Ovary (tissue), 10 donors: ENCODE measurements at regions of chr16 and their contacts with region 1.

Region 1: GRCh38 chr16:88737298-88738150 is 31.2 kb downstream of the CTU2 start:
- DNase-seq: peak; percentile 62 to 86 (median 77)
- H3K4me3 ChIP-seq: no peak overlapping the region
- H3K27ac ChIP-seq: no peak overlapping the region
- H3K4me1 ChIP-seq: no peaks in the 10 kb centered on the region
- H3K27me3 ChIP-seq: no peaks in the 10 kb centered on the region
- CTCF ChIP-seq: peak; percentile 97 to 99 (median 98)
- EP300 ChIP-seq: no peak
- POLR2A ChIP-seq: no peak

Region 2: DNA sequence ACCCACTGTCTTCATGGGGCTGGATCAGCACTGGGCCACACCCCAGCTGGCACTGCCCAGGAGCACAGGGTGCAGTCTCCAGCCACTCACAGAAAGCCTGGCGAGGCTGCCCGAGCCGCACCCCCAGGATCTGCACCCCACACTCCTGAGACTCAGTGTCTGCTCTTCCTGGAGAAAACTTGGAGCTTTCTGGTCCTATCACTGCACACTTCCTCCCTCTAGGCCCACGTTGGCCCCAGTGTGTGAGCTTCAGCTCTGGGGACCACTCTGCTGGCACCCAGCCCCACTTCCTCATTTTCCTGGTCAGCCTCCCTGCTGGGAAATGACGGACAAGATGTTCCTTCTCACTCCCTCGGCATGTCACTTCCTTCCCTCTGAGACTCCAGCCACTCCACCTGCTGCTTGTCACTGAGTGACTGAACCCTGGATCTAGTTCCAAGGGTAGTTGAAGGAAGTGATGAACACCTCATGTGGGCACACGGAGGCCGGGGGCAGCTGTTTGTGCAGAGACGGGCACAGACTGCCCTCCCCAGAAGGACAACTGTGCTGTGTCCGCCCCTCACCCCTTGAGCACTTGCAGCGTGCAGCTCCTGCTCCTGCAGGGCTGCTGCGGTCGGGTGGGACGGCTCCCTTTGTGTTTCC is 138.3 kb before region 1 on chr16:
- intact Hi-C with region 1: no loop called
- DNase-seq: peak in 2 of 5 donors; percentile 40 to 49
- H3K4me3 ChIP-seq: no peak overlapping the region
- H3K27ac ChIP-seq: no peak overlapping the region
- H3K4me1 ChIP-seq: no peaks in the 10 kb centered on the region
- H3K27me3 ChIP-seq: no peaks in the 10 kb centered on the region
- CTCF ChIP-seq: no peak
- EP300 ChIP-seq: no peak
- POLR2A ChIP-seq: no peak

Region 3: DNA sequence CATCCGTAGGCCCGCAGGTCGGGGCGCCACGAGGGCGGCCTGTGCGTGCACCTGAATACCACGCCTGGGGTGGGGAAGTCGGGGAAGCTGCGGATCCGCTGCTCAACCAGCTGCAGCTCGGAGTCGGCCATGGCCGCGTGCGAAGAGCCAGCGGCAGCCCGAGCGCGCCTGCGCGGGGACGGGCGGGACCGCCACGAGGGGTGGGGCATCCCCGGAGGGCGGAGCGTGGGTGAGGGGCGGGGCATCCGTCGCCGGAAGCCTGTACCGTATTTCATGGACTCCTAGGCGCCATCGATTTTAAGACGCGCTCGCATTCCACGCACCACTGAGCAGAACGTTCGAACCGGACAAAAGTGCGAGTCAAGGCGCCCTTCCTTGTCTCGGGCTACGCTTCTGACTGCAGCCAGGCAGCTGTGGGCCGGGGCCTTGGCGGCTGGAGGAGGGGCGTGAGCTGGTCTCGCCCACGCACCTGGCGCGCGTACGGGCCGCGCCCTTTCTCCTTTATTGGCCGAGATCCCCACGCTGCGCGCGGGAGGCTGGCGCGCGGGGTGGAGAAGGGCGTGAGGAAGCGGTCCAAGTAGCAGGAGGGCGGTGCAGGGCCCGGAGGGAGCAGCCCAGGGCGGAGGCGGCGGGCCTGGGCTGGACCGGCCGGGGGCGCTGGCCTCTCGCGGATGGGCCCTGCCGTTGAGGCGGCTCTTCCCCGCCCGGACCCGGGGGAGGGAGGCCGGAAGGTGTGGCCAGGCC is 74.4 kb after region 1 on chr16 and contains the start of gene APRT:
- intact Hi-C with region 1: loop called in 1 of 4 experiments (anchors 2 kb)
- DNase-seq: peak; percentile 95 to 99 (median 97)
- H3K4me3 ChIP-seq: peak within 1 kb of the TSS; percentile 65
- H3K27ac ChIP-seq: peak within 1 kb of the TSS; percentile 93 to 95
- H3K4me1 ChIP-seq: peaks cover 7% of the 10 kb centered on the region
- H3K27me3 ChIP-seq: no peaks in the 10 kb centered on the region
- CTCF ChIP-seq: peak in 2 of 3 donors; percentile 37 to 55
- EP300 ChIP-seq: no peak
- POLR2A ChIP-seq: peak; percentile 73
- total RNA-seq, gene APRT: 51.3 to 150 (median 74.1) TPM

Region 4: DNA sequence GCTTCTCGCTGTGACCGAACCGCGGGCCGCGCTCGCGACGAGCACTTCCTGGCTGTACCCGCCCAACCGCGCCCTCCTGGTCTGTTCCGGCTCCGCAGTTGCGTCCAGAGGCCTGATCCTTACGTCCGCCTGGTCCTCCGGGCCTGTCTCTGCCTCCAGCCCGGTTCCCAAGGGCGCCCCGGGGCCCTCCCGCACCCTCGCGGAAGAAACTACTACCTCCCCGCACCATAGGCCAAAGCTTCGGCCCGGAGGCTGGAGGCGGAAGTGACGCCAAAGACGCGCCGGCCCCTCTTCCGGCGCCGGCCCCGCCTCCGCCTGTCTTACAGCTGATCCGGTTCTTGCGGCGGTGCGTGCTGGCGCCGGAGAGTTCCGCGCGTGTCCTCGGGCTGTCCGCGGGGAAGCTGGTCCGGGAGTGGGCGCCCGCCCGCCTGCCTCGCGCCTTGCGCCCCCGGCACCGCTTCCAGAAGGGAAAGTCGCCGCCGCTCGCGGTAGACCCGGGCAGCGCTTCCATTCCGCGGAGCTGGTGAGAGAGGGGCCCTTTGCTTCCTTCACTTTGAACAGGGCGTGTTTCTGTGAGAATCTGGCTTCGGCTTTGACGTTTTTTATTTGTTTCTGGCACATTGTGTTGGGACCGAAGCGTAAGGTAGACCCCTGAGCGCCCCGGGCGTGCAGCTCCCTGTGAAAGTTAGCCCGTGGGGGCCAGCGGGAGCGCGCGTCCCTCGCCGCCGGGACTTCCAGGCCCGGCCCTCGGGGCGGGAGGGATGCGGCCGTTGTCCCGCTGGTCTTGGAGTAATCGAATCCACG is 480.1 kb after region 1 on chr16 and contains the start of gene ZNF778:
- intact Hi-C with region 1: loop called (anchors 5 to 10 kb)
- DNase-seq: peak; percentile 77 to 88 (median 82)
- H3K4me3 ChIP-seq: peak within 1 kb of the TSS; percentile 99
- H3K27ac ChIP-seq: peak within 1 kb of the TSS; percentile 77 to 96
- H3K4me1 ChIP-seq: peaks cover 2% of the 10 kb centered on the region
- H3K27me3 ChIP-seq: no peaks in the 10 kb centered on the region
- CTCF ChIP-seq: peak in 1 of 3 donors; percentile 30
- EP300 ChIP-seq: no peak
- POLR2A ChIP-seq: peak; percentile 80
- total RNA-seq, gene ZNF778: 7.8 to 71.9 (median 8.4) TPM